Vagina (tissue), 2 donors: ENCODE measurements at regions of chr10 and their contacts with region 1.

Region 1: GRCh38 chr10:114304017-114304570 is 65.0 kb downstream of the VWA2 start:
- DNase-seq: no peak
- H3K4me3 ChIP-seq: peak overlapping the region; percentile 23 to 41
- H3K27ac ChIP-seq: peak overlapping the region; percentile 62
- H3K4me1 ChIP-seq: peaks cover 19% of the 10 kb centered on the region
- H3K27me3 ChIP-seq: no peaks in the 10 kb centered on the region
- CTCF ChIP-seq: peak; percentile 52 to 87 (median 53)
- POLR2A ChIP-seq: no peak

Region 2: GRCh38 chr10:113978802-113979201 is 325.3 kb before region 1 on chr10:
- intact Hi-C with region 1: no loop called
- DNase-seq: no peak
- H3K4me3 ChIP-seq: no peak overlapping the region
- H3K27ac ChIP-seq: no peak overlapping the region
- H3K4me1 ChIP-seq: peaks cover 10% of the 10 kb centered on the region
- H3K27me3 ChIP-seq: no peaks in the 10 kb centered on the region
- CTCF ChIP-seq: no peak
- POLR2A ChIP-seq: no peak

Region 3: GRCh38 chr10:114403541-114404161 is 99.6 kb after region 1 on chr10:
- intact Hi-C with region 1: loop called (anchors 10 kb)
- DNase-seq: no peak
- H3K4me3 ChIP-seq: peak overlapping the region; percentile 73 to 78
- H3K27ac ChIP-seq: peak overlapping the region; percentile 91
- H3K4me1 ChIP-seq: peaks cover 64% of the 10 kb centered on the region
- H3K27me3 ChIP-seq: no peaks in the 10 kb centered on the region
- CTCF ChIP-seq: no peak
- POLR2A ChIP-seq: no peak

Region 4: GRCh38 chr10:114427124-114427852 is 123.2 kb after region 1 on chr10:
- intact Hi-C with region 1: loop called (anchors 5 kb)
- DNase-seq: peak in 1 of 2 donors; percentile 83
- H3K4me3 ChIP-seq: no peak overlapping the region
- H3K27ac ChIP-seq: no peak overlapping the region
- H3K4me1 ChIP-seq: peaks cover 13% of the 10 kb centered on the region
- H3K27me3 ChIP-seq: no peaks in the 10 kb centered on the region
- CTCF ChIP-seq: no peak
- POLR2A ChIP-seq: no peak

Region 5: GRCh38 chr10:114795039-114795438 is 490.9 kb after region 1 on chr10:
- intact Hi-C with region 1: loop called (anchors 10 kb)
- DNase-seq: no peak
- H3K4me3 ChIP-seq: no peak overlapping the region
- H3K27ac ChIP-seq: no peak overlapping the region
- H3K4me1 ChIP-seq: no peaks in the 10 kb centered on the region
- H3K27me3 ChIP-seq: no peaks in the 10 kb centered on the region
- CTCF ChIP-seq: no peak
- POLR2A ChIP-seq: no peak